Activated CD4-positive, alpha-beta memory T cell treated with anti-CD3 and anti-CD28 coated beads, Interleukin-2, amount 10 ng/mL, durations not matched to agents 7 days and 5 days (primary cell): ENCODE measurements at regions of chrX and their contacts with region 1.

Region 1: DNA sequence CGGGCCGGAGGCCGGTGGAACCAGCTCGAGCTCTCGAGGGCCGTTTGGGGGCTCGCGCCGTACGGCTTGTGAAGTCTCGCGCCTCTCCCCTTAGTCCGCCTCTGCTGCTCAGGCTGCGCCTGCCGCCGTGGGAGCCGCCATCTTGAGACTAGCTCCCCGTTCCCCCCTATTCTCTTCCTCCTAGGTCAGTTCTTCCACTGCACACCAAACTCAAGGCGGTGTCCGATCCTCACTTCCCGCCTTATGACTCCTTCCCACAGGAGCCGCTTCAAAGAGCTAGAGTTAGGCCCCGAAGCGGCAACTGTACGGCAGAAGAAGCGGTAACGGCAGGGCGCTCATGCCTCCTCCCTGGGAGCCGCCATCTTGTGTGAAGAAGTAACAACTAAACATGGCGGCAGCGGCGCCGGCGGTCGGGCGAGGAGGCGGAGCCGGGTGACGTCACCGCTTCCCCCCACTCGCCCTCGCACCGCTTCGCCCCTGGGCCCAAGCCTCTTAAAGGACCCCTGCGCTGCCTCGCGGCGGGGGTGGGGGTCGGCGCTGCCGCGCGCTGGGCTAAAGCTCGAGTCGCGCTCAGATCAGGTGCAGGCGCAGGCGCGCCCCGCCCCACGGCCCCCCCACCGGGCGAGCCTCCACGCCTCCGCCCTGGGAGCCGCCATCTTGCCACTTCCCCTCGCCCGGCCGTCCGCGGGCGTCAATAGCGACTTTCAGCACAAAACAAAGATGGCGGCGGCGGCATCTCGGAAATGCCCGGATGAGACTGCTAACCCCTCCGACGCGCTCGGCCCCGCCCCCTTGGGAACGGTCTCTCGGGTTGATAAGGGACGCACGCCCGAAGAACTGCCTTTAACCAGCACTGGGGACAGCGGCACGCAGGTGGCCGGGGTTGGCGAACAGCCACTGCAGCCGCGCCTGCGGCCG is at the start of gene HCFC1:
- DNase-seq: peak; percentile 90
- H3K4me3 Mint-ChIP-seq: peak within 1 kb of the TSS; percentile 100
- H3K27ac Mint-ChIP-seq: peak within 1 kb of the TSS; percentile 100
- H3K4me1 Mint-ChIP-seq: peaks cover 37% of the 10 kb centered on the region
- H3K27me3 Mint-ChIP-seq: no peaks in the 10 kb centered on the region
- total RNA-seq, gene HCFC1: 88.3 to 93.1 TPM

Region 2: DNA sequence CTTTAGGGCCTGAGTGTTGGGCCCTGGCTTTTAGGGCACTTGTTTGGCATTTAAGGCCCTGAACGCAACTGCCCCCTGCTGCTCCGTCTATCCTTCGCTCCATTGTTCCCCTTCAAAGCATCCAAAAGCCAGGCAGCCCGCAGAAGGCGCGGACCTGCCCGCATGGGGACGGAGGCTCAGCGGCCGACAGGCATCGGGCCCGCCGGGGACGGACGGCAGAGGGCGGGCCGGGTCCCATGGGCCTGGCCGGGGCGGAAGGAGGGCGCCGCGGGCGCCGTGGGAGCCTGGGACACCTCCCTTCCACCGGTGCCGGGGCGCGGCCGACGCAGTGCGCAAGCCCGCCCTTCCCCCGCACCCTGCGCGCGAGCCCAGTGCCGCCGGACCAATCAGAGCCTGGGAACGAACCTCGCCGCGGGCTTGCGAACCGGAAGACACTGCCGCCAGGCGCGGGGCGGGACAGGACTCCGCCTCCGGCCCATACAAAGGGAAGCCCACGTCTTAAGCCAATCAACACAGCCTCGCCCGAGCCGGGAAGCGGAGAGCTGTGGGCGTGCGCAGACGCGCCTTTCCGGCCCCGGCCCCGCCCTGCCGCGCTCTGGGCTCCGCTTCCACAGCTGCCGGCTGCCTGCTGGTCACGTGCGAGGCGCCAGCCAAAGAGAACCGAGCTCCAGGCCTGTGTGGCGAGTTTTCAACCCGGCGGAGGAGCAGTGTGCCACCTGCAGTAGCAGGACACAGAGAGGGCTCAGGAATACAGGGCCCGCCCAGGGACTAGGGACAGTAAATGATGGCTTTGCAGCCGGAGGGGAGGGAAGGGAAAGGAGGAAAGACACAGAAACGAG is 43.6 kb before region 1 on chrX:
- CTCF ChIA-PET with region 1: interaction called, 10 read pairs
- POLR2A ChIA-PET with region 1: interaction called, 201 read pairs
- DNase-seq: peak; percentile 95
- H3K4me3 Mint-ChIP-seq: peak overlapping the region; percentile 91
- H3K27ac Mint-ChIP-seq: peak overlapping the region; percentile 97
- H3K4me1 Mint-ChIP-seq: peaks cover 34% of the 10 kb centered on the region
- H3K27me3 Mint-ChIP-seq: no peaks in the 10 kb centered on the region

Region 3: GRCh38 chrX:153947009-153947769 is 24.5 kb before region 1 on chrX:
- CTCF ChIA-PET with region 1: interaction called, 31 read pairs
- POLR2A ChIA-PET with region 1: interaction called, 6 read pairs
- DNase-seq: peak; percentile 79
- H3K4me3 Mint-ChIP-seq: no peak overlapping the region
- H3K27ac Mint-ChIP-seq: peak overlapping the region; percentile 65
- H3K4me1 Mint-ChIP-seq: peaks cover 17% of the 10 kb centered on the region
- H3K27me3 Mint-ChIP-seq: no peaks in the 10 kb centered on the region

Region 4: GRCh38 chrX:153981771-153982533 is 10.2 kb after region 1 on chrX:
- CTCF ChIA-PET with region 1: interaction called, 9 read pairs
- POLR2A ChIA-PET with region 1: interaction called, 70 read pairs
- DNase-seq: peak; percentile 83
- H3K4me3 Mint-ChIP-seq: peak overlapping the region; percentile 69
- H3K27ac Mint-ChIP-seq: peak overlapping the region; percentile 93
- H3K4me1 Mint-ChIP-seq: peaks cover 57% of the 10 kb centered on the region
- H3K27me3 Mint-ChIP-seq: no peaks in the 10 kb centered on the region

Region 5: DNA sequence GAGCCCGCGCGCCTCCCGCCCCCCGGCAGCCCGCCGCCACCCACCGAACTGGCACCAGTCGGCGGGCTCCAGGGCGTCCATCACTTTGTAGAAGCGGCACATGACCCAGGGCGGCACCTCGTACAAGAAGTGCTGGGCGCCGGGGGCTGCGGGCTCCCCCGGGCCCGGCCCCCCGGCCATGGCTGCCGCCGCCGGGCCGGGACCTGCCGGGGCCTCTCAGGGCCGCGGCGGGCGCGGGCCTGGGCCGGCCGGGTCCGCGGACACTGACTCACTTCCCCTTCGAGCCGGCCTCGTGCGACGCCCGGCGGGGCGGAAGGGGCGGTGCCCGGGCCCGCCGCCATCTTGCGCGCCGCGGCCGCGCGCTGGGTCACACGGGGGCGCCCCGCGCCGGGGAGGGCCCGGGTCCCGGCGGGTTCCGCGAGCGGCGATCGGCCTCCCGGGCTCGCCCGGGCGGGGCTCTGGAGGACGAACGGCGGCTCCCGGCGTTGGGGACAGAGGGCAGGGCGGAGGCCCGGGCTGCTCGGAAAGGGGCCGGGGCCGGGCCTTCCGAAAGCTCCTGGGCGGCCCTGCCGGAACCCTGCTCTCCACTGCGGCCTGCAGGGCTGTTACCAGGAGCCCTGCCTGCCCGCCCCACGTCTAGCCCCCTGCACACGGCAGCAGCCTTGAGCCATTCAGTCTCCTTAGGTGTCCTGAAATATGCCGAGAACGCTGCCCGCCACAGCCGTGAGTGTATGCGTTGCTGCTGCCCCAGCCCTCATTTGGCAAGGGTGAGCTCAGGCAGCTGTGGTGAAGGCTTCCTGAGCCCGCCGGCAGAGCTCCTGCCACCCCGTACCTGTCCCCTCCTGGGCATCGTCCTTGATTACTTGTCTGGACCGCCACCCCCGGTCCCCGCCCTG is 48.2 kb after region 1 on chrX and contains the start of gene IRAK1:
- CTCF ChIA-PET with region 1: no interaction called
- POLR2A ChIA-PET with region 1: interaction called, 20 read pairs
- DNase-seq: peak; percentile 65
- H3K4me3 Mint-ChIP-seq: peak within 1 kb of the TSS; percentile 89
- H3K27ac Mint-ChIP-seq: peak within 1 kb of the TSS; percentile 94
- H3K4me1 Mint-ChIP-seq: peaks cover 19% of the 10 kb centered on the region
- H3K27me3 Mint-ChIP-seq: no peaks in the 10 kb centered on the region
- total RNA-seq, gene IRAK1: 118 to 122 TPM